HAP-1 (cell line): ENCODE measurements at regions of chr14 and their contacts with region 1.

Region 1: DNA sequence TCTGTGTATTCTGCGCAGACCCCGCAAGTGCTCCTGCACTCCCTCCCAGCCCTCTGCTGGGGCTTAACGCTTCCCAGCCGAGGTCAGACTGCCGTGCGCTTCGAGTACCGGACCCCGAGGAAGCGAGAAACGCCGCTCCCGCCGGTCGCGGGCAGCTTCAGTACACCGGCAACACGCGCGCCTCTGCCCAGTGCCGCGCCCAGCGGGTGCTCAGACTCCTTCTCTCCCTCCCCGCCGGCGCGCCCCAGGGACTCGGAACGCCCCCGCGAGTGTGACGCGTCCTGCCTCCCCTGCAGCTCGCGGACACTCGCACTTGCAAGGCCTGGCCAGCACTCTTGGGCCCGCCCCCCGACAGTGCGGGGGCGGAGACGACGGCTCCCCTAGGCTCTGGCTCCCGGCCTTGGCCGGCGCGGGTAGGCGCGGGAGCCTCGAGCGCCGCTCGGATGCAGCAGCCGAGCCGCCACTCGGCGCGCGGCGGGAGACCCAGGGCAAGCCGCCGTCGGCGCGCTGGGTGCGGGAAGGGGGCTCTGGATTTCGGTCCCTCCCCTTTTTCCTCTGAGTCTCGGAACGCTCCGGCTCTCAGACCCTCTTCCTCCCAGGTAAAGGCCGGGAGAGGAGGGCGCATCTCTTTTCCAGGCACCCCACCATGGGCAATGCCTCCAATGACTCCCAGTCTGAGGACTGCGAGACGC is at the start of gene PTGER2:
- DNase-seq: peak in 1 of 2 experiments; percentile 45
- H3K4me3 ChIP-seq: peak within 1 kb of the TSS; percentile 11; the same call in 1 of the 2 replicates
- H3K4me1 ChIP-seq: no peaks in the 10 kb centered on the region
- H3K27me3 ChIP-seq: no peaks in the 10 kb centered on the region

Region 2: DNA sequence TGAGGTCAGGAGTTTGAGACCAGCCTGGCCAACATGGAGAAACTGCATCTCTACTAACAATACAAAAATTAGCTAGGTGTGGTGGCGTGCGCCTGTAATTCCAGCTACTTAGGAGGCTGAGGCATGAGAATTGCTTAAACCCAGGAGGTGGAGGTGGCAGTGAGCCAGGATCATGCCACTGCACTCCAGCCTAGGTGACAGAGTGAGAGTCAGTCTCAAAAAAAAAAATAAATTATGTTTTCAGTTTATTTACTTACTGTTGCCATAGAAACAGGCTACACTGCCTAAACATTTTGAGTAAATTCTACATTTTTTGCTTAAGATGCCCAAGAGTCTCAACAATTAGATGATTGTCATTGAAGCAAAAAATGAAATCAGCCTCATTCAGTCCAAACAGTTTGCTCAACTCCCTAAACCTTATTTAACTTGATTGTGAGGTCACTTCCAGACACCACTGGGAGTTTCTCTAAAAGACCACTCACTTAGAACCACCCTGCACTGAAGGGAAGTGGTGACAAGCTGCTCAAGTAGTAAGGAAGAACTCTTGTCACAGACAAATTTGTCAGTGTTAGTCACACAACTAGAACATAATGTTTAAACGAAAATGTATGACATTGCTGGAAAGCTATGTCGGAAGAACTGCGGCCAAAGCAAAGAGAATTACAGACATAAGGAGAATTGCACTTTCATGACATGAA is 487.1 kb after region 1 on chr14:
- in situ Hi-C with region 1: loop called (anchors 25 kb)
- DNase-seq: no peak
- H3K4me3 ChIP-seq: no peak overlapping the region
- H3K4me1 ChIP-seq: no peaks in the 10 kb centered on the region
- H3K27me3 ChIP-seq: no peaks in the 10 kb centered on the region